GM12878 (cell line): ENCODE measurements at regions of chr1 and their contacts with region 1.

Region 1: DNA sequence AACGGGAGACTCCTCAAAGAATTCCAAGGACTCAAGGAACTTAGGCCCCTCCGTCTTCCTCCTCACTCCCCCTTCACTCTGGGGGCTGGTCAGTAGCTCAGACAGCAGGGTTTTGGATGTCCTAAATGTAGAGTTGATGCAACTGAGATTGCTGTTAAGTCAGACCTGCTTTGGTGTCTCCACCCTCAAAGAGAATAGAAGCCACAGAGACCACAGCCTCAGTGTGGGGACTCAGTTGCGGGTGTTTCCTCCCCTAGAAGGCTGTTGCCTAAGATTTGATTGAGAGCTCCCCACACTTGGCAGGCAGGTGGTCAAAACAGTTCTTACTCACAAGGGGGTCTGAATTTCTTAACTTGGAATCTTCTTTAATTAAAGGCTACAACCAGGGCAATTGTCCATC is 7.6 kb downstream of the MAN1C1 start:
- DNase-seq: no peak
- ATAC-seq: no peak
- H3K4me3 ChIP-seq: no peak overlapping the region
- H3K27ac ChIP-seq: no peak overlapping the region
- H3K4me1 ChIP-seq: peaks cover 20% of the 10 kb centered on the region
- H3K27me3 ChIP-seq: no peaks in the 10 kb centered on the region
- CTCF ChIP-seq: no peak
- EP300 ChIP-seq: no peak
- POLR2A ChIP-seq: no peak
- RAD21 ChIP-seq: no peak

Region 2: DNA sequence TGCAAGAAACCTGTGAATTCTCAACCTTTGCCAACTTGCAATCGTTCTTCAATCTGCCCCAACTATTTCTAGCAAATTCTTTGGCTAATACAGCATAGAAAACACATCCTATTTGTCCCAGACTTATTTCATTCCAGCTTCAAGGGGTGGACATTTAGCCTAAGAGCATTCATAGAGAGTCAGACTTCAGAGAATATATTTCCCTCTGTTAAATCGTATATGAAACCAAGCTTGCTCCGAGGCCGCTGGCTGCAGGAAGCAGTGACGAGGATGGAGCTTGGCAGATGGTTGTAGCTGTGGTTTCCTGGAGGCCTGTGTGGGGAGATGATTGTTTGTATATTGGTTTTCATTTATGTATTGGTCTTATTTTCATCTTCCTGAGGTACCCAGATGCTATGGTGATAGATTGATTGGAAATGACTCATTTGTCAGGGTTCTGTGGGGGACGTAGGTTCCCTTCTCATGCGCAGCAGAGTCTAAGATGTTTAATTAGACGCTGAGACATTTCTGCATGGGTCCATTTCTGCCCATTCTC is 18.5 kb after region 1 on chr1:
- CTCF ChIA-PET with region 1: interaction called, 4 read pairs
- POLR2A ChIA-PET with region 1: interaction called, 10 read pairs
- RAD21 ChIA-PET with region 1: no interaction called
- SMC1A ChIA-PET with region 1: interaction called, 3 read pairs
- in situ Hi-C with region 1: no loop called
- intact Hi-C with region 1: no loop called
- DNase-seq: peak; percentile 44
- ATAC-seq: peak; percentile 93
- H3K4me3 ChIP-seq: no peak overlapping the region
- H3K27ac ChIP-seq: no peak overlapping the region
- H3K4me1 ChIP-seq: no peaks in the 10 kb centered on the region; the same call in 1 of the 2 replicates
- H3K27me3 ChIP-seq: peaks cover 2 to 4% of the 10 kb centered on the region in 2 experiments; a peak in 1 of 4 replicates
- CTCF ChIP-seq: no peak
- EP300 ChIP-seq: no peak
- POLR2A ChIP-seq: no peak
- RAD21 ChIP-seq: no peak

Region 3: DNA sequence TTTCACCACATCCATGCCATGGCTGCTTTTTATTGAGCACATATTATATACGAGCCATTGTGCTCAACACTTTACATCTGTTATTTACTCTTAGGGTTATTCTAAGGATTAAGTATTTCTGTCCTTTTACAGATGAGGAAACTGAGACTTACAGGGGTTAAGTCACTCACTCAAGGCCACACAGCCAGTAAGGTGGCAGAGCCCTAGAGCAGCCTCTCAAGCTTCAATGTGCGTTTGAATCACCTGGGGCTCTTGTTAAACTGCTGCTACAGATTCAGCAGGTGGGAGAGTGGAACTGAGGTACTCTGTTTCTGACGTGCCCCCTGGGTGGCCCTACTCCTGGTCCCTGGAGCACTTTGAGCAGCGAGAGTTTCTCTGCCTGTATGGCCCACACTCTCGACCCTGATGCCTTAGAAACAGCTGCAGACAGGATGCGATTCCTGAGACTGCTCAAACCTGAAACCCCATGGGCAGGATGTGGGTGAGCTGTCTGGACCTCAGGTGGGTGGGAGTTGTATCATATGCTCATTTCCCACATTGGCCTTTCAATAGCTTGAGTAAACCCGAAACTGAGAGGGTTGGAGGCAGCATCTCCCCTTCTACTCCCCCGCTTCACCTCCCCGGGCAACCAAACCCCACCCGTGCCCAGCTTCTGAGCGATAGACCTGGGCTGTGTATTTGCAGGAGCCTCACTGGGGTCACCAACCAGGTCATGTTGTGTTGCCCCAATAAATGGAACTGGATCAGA is 51.7 kb after region 1 on chr1:
- CTCF ChIA-PET with region 1: no interaction called
- POLR2A ChIA-PET with region 1: no interaction called
- RAD21 ChIA-PET with region 1: no interaction called
- SMC1A ChIA-PET with region 1: interaction called, 3 read pairs
- in situ Hi-C with region 1: no loop called
- intact Hi-C with region 1: loop called (anchors 5 kb)
- DNase-seq: peak; percentile 93
- ATAC-seq: peak; percentile 98
- H3K4me3 ChIP-seq: no peak overlapping the region
- H3K27ac ChIP-seq: no peak overlapping the region
- H3K4me1 ChIP-seq: peaks cover 21% of the 10 kb centered on the region
- H3K27me3 ChIP-seq: peaks cover 3 to 15% of the 10 kb centered on the region in 2 experiments
- CTCF ChIP-seq: no peak
- EP300 ChIP-seq: peak; percentile 93 to 97
- POLR2A ChIP-seq: no peak
- RAD21 ChIP-seq: no peak